T-cell (primary cell): ENCODE measurements at regions of chr3 and their contacts with region 1.

Region 1: GRCh38 chr3:151282921-151283320 is 4.6 kb upstream of the P2RY14 start:
- DNase-seq: peak in 2 of 35 experiments; percentile 13 to 80
- ATAC-seq: peak; percentile 49 to 69 (median 66)
- H3K4me3 ChIP-seq: no peak overlapping the region
- H3K4me3 Mint-ChIP-seq: no peak overlapping the region
- H3K27ac ChIP-seq: no peak overlapping the region
- H3K27ac Mint-ChIP-seq: peak overlapping the region in 1 of 2 donors; percentile 66
- H3K4me1 ChIP-seq: peaks cover 0 to 30% of the 10 kb centered on the region in 2 experiments
- H3K4me1 Mint-ChIP-seq: peaks cover 13 to 34% (median 32%) of the 10 kb centered on the region in 3 donors
- H3K27me3 ChIP-seq: no peaks in the 10 kb centered on the region
- H3K27me3 Mint-ChIP-seq: no peaks in the 10 kb centered on the region

Region 2: GRCh38 chr3:150555859-150556436 is 727.0 kb before region 1 on chr3:
- CTCF ChIA-PET with region 1: no interaction called
- POLR2A ChIA-PET with region 1: interaction called in 1 of 2 experiments, 10 read pairs
- DNase-seq: no peak
- ATAC-seq: no peak
- H3K4me3 ChIP-seq: no peak overlapping the region
- H3K4me3 Mint-ChIP-seq: no peak overlapping the region
- H3K27ac ChIP-seq: no peak overlapping the region
- H3K27ac Mint-ChIP-seq: peak overlapping the region; percentile 28 to 36
- H3K4me1 ChIP-seq: peaks cover 0 to 6% of the 10 kb centered on the region in 2 experiments
- H3K4me1 Mint-ChIP-seq: peaks cover 33 to 47% (median 43%) of the 10 kb centered on the region in 3 donors
- H3K27me3 ChIP-seq: no peaks in the 10 kb centered on the region
- H3K27me3 Mint-ChIP-seq: no peaks in the 10 kb centered on the region

Region 3: DNA sequence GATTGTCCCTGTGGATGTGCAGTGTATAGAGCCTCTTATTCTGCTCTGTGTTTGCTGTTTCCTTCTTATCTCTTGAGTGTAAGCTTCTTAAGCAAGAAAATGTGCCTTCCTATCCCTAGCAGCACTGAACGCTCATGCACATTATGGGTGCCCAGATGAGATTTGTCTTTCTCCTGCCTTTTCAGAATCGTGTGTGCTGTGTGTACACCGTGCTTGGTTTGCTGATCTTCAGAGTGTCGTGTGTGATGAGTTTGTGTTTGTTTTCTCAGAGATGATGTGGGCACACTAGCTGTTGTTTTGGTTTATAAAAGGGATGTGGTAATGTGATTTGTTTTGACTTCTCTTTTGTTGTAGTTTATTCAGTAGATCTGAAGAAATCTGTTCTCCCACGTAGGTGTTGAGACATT is 99.7 kb before region 1 on chr3:
- CTCF ChIA-PET with region 1: interaction called, 3 read pairs
- POLR2A ChIA-PET with region 1: interaction called in 1 of 2 experiments, 14 read pairs
- DNase-seq: peak in 10 of 35 experiments; percentile 5 to 50 (median 16)
- ATAC-seq: peak; percentile 71 to 88 (median 86)
- H3K4me3 ChIP-seq: no peak overlapping the region
- H3K4me3 Mint-ChIP-seq: peak overlapping the region; percentile 58 to 68 (median 62)
- H3K27ac ChIP-seq: peak overlapping the region; percentile 33
- H3K27ac Mint-ChIP-seq: peak overlapping the region; percentile 85 to 91
- H3K4me1 ChIP-seq: peaks cover 5 to 12% of the 10 kb centered on the region in 2 experiments
- H3K4me1 Mint-ChIP-seq: peaks cover 31 to 44% (median 33%) of the 10 kb centered on the region in 3 donors
- H3K27me3 ChIP-seq: no peaks in the 10 kb centered on the region
- H3K27me3 Mint-ChIP-seq: no peaks in the 10 kb centered on the region

Region 4: GRCh38 chr3:151227807-151228665 is 54.9 kb before region 1 on chr3:
- CTCF ChIA-PET with region 1: interaction called, 22 to 23 read pairs
- POLR2A ChIA-PET with region 1: no interaction called
- DNase-seq: peak; percentile 47 to 90 (median 69)
- ATAC-seq: peak; percentile 79 to 87 (median 84)
- H3K4me3 ChIP-seq: no peak overlapping the region
- H3K4me3 Mint-ChIP-seq: no peak overlapping the region
- H3K27ac ChIP-seq: no peak overlapping the region
- H3K27ac Mint-ChIP-seq: peak overlapping the region; percentile 62 to 68
- H3K4me1 ChIP-seq: peaks cover 19 to 48% of the 10 kb centered on the region in 2 experiments
- H3K4me1 Mint-ChIP-seq: peaks cover 53 to 58% (median 54%) of the 10 kb centered on the region in 3 donors
- H3K27me3 ChIP-seq: no peaks in the 10 kb centered on the region
- H3K27me3 Mint-ChIP-seq: no peaks in the 10 kb centered on the region

Region 5: GRCh38 chr3:152127058-152127457 is 844.1 kb after region 1 on chr3:
- CTCF ChIA-PET with region 1: no interaction called
- POLR2A ChIA-PET with region 1: interaction called in 1 of 2 experiments, 10 read pairs
- DNase-seq: peak in 1 of 35 experiments; percentile 4
- ATAC-seq: no peak
- H3K4me3 ChIP-seq: no peak overlapping the region
- H3K4me3 Mint-ChIP-seq: no peak overlapping the region
- H3K27ac ChIP-seq: no peak overlapping the region
- H3K27ac Mint-ChIP-seq: no peak overlapping the region
- H3K4me1 ChIP-seq: no peaks in the 10 kb centered on the region
- H3K4me1 Mint-ChIP-seq: peaks cover 11 to 23% (median 15%) of the 10 kb centered on the region in 3 donors
- H3K27me3 ChIP-seq: no peaks in the 10 kb centered on the region
- H3K27me3 Mint-ChIP-seq: no peaks in the 10 kb centered on the region

Region 6: GRCh38 chr3:153161138-153161713 is 1878.3 kb after region 1 on chr3:
- CTCF ChIA-PET with region 1: no interaction called
- POLR2A ChIA-PET with region 1: interaction called in 1 of 2 experiments, 10 read pairs
- DNase-seq: peak; percentile 71 to 95 (median 90)
- ATAC-seq: peak; percentile 75 to 84 (median 80)
- H3K4me3 ChIP-seq: peak overlapping the region; percentile 70 to 88
- H3K4me3 Mint-ChIP-seq: peak overlapping the region; percentile 96 to 99 (median 98)
- H3K27ac ChIP-seq: peak overlapping the region; percentile 77
- H3K27ac Mint-ChIP-seq: peak overlapping the region; percentile 96
- H3K4me1 ChIP-seq: peaks cover 11 to 29% of the 10 kb centered on the region in 2 experiments
- H3K4me1 Mint-ChIP-seq: peaks cover 31 to 38% (median 37%) of the 10 kb centered on the region in 3 donors
- H3K27me3 ChIP-seq: no peaks in the 10 kb centered on the region
- H3K27me3 Mint-ChIP-seq: no peaks in the 10 kb centered on the region